Activated T-helper 1 cell treated with anti-CD3 and anti-CD28 coated beads, Interleukin-12 subunit alpha, Interleukin-12 subunit beta, Interleukin-2, Interleukin-4 antibody, amounts not matched to agents 30 ng/mL and 10 ng/mL and 1 ng/mL, durations not matched to agents 14 hours and 24 hours and 36 hours (primary cell): ENCODE measurements at regions of chr6 and their contacts with region 1.

Region 1: GRCh38 chr6:3068329-3069214 is at the start of gene RIPK1:
- DNase-seq: peak; percentile 96
- H3K4me3 Mint-ChIP-seq: peak within 1 kb of the TSS; percentile 93
- H3K27ac Mint-ChIP-seq: peak within 1 kb of the TSS; percentile 96
- H3K4me1 Mint-ChIP-seq: peaks cover 58% of the 10 kb centered on the region
- H3K27me3 Mint-ChIP-seq: no peaks in the 10 kb centered on the region
- total RNA-seq, gene RIPK1: 17.1 and 19.4 TPM in 2 replicates

Region 2: DNA sequence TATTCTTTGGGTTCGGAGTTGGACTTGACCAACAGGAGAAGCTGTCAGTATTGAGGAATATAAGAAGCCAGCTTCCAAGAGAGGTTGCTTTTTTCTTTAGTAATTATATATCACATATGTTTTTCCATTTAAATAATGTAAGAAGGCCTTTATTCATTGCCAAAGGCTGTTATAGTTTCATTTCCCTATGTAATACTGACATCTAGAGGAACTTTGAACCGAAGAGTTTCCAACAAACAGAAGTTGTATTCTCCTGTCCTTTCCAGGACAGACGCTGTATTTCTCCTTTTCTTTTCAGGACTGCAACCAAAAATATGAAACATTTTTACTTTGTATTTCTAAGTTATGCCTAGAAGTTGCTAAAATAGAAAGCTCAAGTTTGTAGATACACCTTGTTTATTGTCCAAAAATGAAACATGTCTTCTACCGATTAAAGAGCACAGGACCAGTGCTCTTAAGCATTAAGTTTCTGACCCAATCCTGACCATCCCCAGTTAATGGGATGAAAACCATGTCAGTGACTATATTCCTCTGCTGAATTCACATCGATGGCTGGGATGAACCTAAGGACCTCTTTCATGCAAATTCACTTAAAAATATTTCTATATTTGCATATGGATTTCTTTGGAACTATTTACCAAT is 373.0 kb before region 1 on chr6:
- intact Hi-C with region 1: no loop called
- DNase-seq: no peak
- H3K4me3 Mint-ChIP-seq: no peak overlapping the region
- H3K27ac Mint-ChIP-seq: no peak overlapping the region
- H3K4me1 Mint-ChIP-seq: no peaks in the 10 kb centered on the region
- H3K27me3 Mint-ChIP-seq: peaks cover 6% of the 10 kb centered on the region

Region 3: GRCh38 chr6:2846873-2847224 is 221.7 kb before region 1 on chr6:
- intact Hi-C with region 1: loop called (anchors 2 kb)
- DNase-seq: no peak
- H3K4me3 Mint-ChIP-seq: peak overlapping the region; percentile 31
- H3K27ac Mint-ChIP-seq: peak overlapping the region; percentile 41
- H3K4me1 Mint-ChIP-seq: peaks cover 60% of the 10 kb centered on the region
- H3K27me3 Mint-ChIP-seq: no peaks in the 10 kb centered on the region

Region 4: GRCh38 chr6:3023663-3024483 is 44.7 kb before region 1 on chr6:
- intact Hi-C with region 1: loop called (anchors 1 kb)
- DNase-seq: peak; percentile 87
- H3K4me3 Mint-ChIP-seq: peak overlapping the region; percentile 87
- H3K27ac Mint-ChIP-seq: peak overlapping the region; percentile 91
- H3K4me1 Mint-ChIP-seq: peaks cover 51% of the 10 kb centered on the region
- H3K27me3 Mint-ChIP-seq: no peaks in the 10 kb centered on the region

Region 5: GRCh38 chr6:3118353-3119039 is 49.9 kb after region 1 on chr6 and contains the start of gene BPHL:
- intact Hi-C with region 1: loop called (anchors 1 kb)
- DNase-seq: peak; percentile 99
- H3K4me3 Mint-ChIP-seq: peak within 1 kb of the TSS; percentile 82
- H3K27ac Mint-ChIP-seq: peak within 1 kb of the TSS; percentile 78
- H3K4me1 Mint-ChIP-seq: peaks cover 23% of the 10 kb centered on the region
- H3K27me3 Mint-ChIP-seq: no peaks in the 10 kb centered on the region
- total RNA-seq, gene BPHL: 6.6 and 7.9 TPM in 2 replicates

Region 6: DNA sequence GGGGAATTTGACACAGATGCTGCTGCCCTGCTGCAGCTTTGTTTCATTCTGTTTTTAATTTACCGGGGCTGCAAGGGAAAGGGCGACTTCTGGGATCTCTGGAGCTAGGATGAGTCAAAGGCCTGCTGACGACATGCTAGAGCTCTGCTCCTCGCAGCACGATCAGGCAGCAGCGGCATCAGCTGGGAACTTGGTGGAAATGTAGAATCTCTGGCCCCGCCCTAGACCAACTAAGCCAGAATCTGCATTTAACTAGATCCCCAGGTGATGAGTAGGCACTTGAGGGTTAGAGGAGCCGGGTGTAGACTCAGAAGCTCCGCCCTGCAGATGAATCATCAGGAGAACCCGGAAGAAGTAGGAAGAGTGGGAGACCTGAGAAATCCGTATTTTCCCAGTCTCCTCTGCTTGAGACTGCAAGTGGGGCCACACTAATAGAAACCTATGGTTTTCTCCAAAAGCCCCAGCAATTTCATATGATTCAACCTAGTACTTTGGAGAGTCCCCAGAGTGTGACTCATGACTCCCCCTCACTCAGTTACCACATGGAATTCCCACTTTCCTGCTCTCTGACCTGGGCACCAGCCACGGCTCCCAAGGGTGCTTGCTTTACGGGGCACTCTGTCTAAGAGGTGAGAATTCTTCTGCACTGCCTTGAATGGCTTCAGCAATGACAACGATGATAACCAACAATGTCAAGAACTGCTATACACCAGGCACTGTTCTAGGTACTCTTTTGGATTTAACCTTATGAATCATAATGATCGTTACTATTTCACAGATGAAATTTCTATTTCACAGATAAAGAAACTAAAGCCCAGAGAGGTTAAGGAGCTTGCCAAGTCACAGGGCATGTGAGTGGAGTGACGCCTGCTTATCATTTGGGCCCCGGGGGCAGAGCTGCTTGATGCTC is 140.8 kb after region 1 on chr6:
- intact Hi-C with region 1: loop called (anchors 1 kb)
- DNase-seq: no peak
- H3K4me3 Mint-ChIP-seq: peak overlapping the region; percentile 43
- H3K27ac Mint-ChIP-seq: peak overlapping the region; percentile 89
- H3K4me1 Mint-ChIP-seq: peaks cover 41% of the 10 kb centered on the region
- H3K27me3 Mint-ChIP-seq: peaks cover 23% of the 10 kb centered on the region

Region 7: GRCh38 chr6:4018172-4018905 is 949.8 kb after region 1 on chr6:
- intact Hi-C with region 1: loop called (anchors 2 kb)
- DNase-seq: peak; percentile 96
- H3K4me3 Mint-ChIP-seq: peak overlapping the region; percentile 99
- H3K27ac Mint-ChIP-seq: peak overlapping the region; percentile 100
- H3K4me1 Mint-ChIP-seq: peaks cover 60% of the 10 kb centered on the region
- H3K27me3 Mint-ChIP-seq: no peaks in the 10 kb centered on the region